A549 (cell line): ENCODE measurements at regions of chr3 and their contacts with region 1.

Region 1: DNA sequence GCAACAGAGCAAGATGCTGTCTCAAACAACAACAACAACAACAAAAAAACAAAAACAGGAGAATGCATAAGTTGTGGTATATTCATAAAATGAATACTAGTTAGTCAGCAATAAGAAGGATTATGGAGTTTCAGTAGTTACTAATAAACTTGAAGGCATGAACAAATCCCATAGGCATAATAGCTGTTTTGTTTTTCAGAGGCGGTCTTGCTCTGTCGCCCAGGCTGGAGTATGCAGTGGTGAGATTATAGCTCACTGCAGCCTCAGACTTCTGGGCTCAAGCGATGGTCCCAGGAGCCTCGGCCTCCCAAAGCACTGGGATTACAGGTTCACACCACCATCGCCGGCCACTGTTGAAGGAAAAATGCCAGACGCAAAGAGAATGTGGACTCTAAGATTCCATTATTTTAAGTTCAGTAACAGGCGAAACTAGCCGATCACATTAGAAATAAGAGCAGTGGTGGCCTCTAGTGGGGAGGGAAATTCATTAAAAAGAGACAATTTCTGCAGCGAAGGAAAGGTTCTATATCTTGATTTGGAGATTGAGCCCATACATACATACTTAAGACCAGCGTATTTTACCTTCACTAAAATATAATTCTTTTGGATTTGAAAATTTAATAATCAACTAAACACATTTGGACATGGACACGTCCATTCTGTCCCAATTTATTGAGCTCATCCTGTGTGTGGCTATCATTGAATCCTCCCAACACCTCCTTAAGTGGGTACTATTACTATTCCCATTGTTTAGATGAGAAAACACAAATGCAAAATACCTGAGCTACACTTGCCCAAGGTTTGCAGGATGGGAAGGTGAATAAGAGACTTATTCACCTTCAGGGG is 27.4 kb upstream of the HDAC11 start:
- DNase-seq: peak; percentile 55 to 66
- ATAC-seq: peak; percentile 70 to 74
- H3K4me3 ChIP-seq: peak overlapping the region; percentile 55
- H3K27ac ChIP-seq: peak overlapping the region; percentile 72 to 86
- H3K4me1 ChIP-seq: 0 out of 3 replicates have a peak, but pooled peaks cover 5% of the 10 kb centered on the region
- CTCF ChIP-seq: peak; percentile 85
- EP300 ChIP-seq: no peak
- POLR2A ChIP-seq: no peak
- RAD21 ChIP-seq: peak; percentile 83 to 84

Region 2: GRCh38 chr3:13200946-13201345 is 251.8 kb before region 1 on chr3:
- CTCF ChIA-PET with region 1: interaction called, 13 read pairs
- POLR2A ChIA-PET with region 1: no interaction called
- DNase-seq: peak in 1 of 2 experiments; percentile 17
- ATAC-seq: peak in 1 of 2 experiments; percentile 18; a peak in 1 of 6 replicates
- H3K4me3 ChIP-seq: no peak overlapping the region
- H3K27ac ChIP-seq: no peak overlapping the region
- H3K4me1 ChIP-seq: no peaks in the 10 kb centered on the region
- CTCF ChIP-seq: no peak
- EP300 ChIP-seq: no peak
- POLR2A ChIP-seq: no peak
- RAD21 ChIP-seq: peak; percentile 27 to 31; a peak in 3 of 5 replicates

Region 3: DNA sequence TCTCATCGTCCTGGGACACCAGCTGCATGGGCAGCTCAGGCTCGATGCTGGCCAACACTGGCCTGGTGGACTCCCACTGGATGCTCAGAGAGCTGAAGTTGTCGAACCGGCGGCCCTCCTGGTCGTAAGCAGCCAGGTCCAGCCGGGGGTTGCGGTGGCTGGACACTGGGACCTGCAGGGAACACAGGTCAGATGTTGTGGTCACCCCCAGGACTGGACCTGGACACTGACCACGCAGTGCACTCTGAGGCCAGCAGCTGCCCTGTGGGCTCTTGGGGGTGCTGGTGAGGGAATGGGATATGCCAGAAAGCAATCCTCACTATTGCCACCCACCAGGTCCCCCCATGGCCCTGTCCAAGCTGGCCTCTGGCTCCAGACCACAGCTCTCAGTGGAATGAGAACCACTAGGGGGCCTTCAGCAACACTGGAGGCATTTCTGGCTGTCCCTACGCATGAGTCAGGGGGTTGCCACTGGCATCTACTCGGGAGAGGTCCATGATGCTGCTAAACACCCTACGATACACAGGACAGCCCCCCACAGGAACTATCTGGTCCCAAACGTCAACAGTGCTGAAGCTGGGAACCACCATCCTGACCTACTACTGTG is 98.7 kb before region 1 on chr3:
- CTCF ChIA-PET with region 1: interaction called, 16 read pairs
- POLR2A ChIA-PET with region 1: no interaction called
- DNase-seq: peak; percentile 15 to 40
- ATAC-seq: peak; percentile 73 to 84
- H3K4me3 ChIP-seq: no peak overlapping the region
- H3K27ac ChIP-seq: no peak overlapping the region
- H3K4me1 ChIP-seq: peaks cover 12% of the 10 kb centered on the region
- CTCF ChIP-seq: peak; percentile 32; the same call in 2 of the 3 replicates
- EP300 ChIP-seq: no peak
- POLR2A ChIP-seq: no peak
- RAD21 ChIP-seq: 0 out of 5 replicates have a peak, but pooled peaks of 1 of the 2 experiments have one; percentile 14

Region 4: GRCh38 chr3:13391308-13391707 is 61.4 kb before region 1 on chr3:
- CTCF ChIA-PET with region 1: interaction called, 32 read pairs
- POLR2A ChIA-PET with region 1: no interaction called
- DNase-seq: no peak
- ATAC-seq: peak in 1 of 2 experiments; percentile 45; a peak in 3 of 6 replicates
- H3K4me3 ChIP-seq: no peak overlapping the region
- H3K27ac ChIP-seq: no peak overlapping the region
- H3K4me1 ChIP-seq: no peaks in the 10 kb centered on the region
- CTCF ChIP-seq: peak; percentile 17; the same call in 1 of the 3 replicates
- EP300 ChIP-seq: no peak
- POLR2A ChIP-seq: no peak
- RAD21 ChIP-seq: no peak

Region 5: DNA sequence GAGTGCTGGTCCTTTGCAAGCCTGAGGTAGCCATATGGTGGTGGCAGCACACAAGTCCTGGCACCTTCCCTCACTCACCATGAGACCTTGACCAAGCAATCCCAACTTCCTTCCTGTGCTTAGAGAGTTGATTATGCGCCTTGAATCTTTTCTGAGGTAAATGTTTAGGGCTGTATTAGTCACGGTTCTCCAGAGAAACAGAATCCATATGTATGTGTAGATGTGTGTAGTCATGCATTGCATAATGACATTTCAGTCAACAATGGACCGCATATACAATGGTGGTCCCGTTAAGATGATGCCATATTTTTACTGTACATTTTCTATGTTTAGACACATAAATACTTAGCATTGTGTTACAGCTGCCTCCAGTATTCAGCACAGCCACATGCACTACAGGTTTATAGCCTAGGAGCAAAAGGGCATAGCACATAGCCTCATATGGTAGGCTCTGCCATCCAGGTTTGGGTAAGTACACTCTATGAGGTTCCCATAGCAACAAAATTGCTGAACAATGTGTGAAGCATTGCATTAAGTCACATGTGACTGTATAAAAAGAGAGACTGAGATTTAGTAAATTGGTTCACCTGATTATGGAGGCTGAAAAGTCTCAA is 12.4 kb before region 1 on chr3:
- CTCF ChIA-PET with region 1: interaction called, 19 read pairs
- POLR2A ChIA-PET with region 1: interaction called, 4 read pairs
- DNase-seq: no peak
- ATAC-seq: 0 out of 6 replicates have a peak, but pooled peaks of 1 of the 2 experiments have one; percentile 34
- H3K4me3 ChIP-seq: no peak overlapping the region
- H3K27ac ChIP-seq: no peak overlapping the region
- H3K4me1 ChIP-seq: no peaks in the 10 kb centered on the region
- CTCF ChIP-seq: no peak
- EP300 ChIP-seq: no peak
- POLR2A ChIP-seq: no peak
- RAD21 ChIP-seq: no peak